ENCODE measurements at regions of chr17 and their contacts with region 1.

Region 1: DNA sequence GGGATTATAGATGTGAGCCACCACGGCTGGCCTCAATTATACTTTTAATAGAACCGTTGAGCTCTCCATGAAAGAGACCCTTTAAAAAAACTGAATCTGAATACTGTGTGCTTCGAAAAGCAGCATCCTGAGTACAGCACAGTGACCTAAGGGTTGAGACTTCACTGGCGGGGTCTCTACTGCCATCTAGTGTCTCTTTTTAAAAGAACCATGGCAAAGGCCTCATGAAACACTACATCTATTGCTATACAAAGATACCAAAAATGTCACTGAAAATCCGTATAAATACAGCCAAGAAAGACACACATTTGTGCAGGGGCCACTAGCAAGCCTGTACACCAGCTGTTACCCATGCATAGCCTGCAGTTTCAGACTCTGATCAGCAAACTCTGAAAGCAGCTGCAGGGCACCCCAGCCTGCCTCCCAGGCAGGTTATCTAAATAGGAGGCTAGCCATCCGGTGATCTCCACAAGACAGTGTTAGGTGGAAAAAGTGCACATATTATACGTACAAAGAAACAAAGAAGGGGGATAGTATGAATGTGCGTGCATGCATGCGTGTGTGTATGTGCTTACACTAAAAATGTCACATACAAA is 35.3 kb downstream of the NPLOC4 start:
- DNase-seq: no peak
- H3K4me3 ChIP-seq: no peak overlapping the region
- CTCF ChIP-seq: peak; percentile 55

Region 2: DNA sequence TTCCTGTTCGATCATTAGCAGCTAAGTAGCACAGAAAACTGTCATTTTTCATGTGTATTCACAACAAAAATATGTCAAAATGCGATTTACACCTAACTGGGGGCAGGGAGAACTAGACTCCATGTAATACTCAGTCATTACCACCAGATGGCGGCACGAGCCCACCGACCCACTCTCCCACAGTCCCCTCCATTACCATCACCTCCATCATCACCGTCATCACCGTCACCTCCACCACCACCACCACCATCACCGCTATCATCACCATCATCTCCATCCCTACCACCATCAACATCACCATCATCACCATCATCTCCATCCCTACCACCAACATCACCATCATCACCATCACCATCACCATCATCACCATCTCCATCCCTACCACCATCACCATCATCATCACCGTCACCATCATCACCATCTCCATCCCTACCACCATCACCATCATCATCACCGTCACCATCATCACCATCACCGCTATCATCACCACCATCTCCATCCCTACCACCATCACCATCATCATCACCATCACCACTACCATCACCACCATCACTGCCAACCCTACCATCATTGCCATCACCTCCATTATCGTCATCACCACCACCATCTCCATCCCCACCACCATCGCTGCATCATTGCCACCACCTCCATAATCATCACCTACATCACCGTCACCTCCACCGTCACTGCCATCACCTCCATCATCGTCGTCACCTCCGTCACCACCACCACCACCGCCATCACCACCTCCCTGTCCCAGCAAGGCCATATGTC is 348.1 kb before region 1 on chr17:
- CTCF ChIA-PET with region 1: interaction called, 15 read pairs
- POLR2A ChIA-PET with region 1: no interaction called
- DNase-seq: no peak
- H3K4me3 ChIP-seq: no peak overlapping the region
- CTCF ChIP-seq: peak; percentile 77

Region 3: GRCh38 chr17:81537343-81537855 is 64.2 kb before region 1 on chr17:
- CTCF ChIA-PET with region 1: interaction called, 37 read pairs
- POLR2A ChIA-PET with region 1: no interaction called
- DNase-seq: no peak
- H3K4me3 ChIP-seq: no peak overlapping the region
- CTCF ChIP-seq: peak; percentile 67

Region 4: DNA sequence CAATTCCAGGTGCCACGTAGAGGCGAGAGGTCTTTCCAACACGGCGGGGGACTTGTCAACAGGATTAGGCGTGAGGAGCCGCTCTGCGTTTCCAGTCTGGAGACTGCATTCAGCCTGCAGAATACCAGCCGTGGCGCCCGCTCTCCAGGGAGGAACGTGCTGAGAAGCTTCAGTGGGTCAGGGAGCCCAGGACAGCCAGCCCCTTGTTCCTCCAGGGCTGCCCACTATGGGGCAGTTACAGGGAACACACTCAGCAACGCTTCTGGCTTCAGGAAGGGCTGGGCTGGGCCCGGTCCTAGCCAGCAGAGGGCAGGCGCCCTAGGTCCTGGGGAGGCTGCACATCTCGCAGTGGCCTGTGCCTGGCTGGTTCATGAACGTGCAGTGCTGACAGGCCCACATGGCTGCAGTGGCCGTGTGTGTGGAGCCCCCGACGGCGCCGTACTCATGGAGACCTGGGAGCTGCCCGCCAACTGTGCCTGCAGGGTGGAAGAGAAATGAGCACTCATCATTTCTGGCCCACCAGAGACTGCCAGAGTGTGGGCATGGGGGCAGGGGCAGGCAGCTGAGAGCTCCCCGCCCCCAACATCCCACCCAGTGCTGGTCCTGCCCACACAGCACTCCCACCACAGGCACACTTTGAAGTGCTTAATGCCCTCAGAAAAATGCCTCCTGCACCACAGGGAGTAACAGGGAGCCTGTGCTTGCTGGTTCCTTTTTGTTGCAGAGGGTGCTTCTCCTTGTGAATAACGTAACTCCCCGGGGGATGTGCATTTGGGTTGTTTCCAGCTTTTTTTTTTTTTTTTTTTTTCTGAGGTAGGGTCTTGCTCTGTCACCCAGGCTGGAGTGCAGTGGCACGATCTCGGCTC is 42.4 kb before region 1 on chr17:
- CTCF ChIA-PET with region 1: interaction called, 89 read pairs
- POLR2A ChIA-PET with region 1: no interaction called
- DNase-seq: no peak
- H3K4me3 ChIP-seq: no peak overlapping the region
- CTCF ChIP-seq: peak; percentile 39

Region 5: GRCh38 chr17:81590121-81590520 is 11.5 kb before region 1 on chr17:
- CTCF ChIA-PET with region 1: interaction called, 90 read pairs
- POLR2A ChIA-PET with region 1: no interaction called
- DNase-seq: no peak
- H3K4me3 ChIP-seq: no peak overlapping the region
- CTCF ChIP-seq: no peak

Region 6: DNA sequence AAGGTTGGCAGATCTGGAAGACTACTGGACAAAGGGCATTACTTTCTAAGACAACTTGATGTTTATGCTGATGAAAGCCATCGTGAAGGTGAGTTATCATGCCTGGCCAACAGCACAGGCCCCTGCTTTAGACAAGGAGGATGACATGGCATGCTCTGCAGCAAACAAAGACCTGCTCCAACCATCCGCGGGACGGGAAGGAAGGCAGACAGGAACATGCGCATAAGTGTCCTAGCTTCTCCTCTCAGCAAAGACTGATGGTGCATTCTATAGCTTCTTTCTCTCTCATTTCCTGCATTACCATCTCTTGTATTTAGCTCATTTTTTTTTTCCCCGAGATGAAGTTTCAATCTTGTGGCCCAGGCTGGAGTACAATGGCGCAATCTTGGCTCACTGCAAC is 29.9 kb after region 1 on chr17:
- CTCF ChIA-PET with region 1: interaction called, 32 read pairs
- POLR2A ChIA-PET with region 1: no interaction called
- DNase-seq: no peak
- H3K4me3 ChIP-seq: no peak overlapping the region
- CTCF ChIP-seq: no peak

Region 7: GRCh38 chr17:81911277-81911961 is 309.8 kb after region 1 on chr17 and contains the start of gene PCYT2:
- CTCF ChIA-PET with region 1: no interaction called
- POLR2A ChIA-PET with region 1: no interaction called
- DNase-seq: no peak
- H3K4me3 ChIP-seq: peak within 1 kb of the TSS; percentile 74
- CTCF ChIP-seq: no peak

Measured in AG04449 (cell line).